Psoas muscle (tissue), 8 donors: ENCODE measurements at regions of chr19 and their contacts with region 1.

Region 1: GRCh38 chr19:18357041-18357440 is 16.6 kb downstream of the PGPEP1 start:
- DNase-seq: no peak
- ATAC-seq: no peak
- H3K4me3 ChIP-seq: no peak overlapping the region
- H3K27ac ChIP-seq: no peak overlapping the region
- H3K4me1 ChIP-seq: peaks cover 3% of the 10 kb centered on the region
- H3K27me3 ChIP-seq: no peaks in the 10 kb centered on the region
- CTCF ChIP-seq: no peak

Region 2: DNA sequence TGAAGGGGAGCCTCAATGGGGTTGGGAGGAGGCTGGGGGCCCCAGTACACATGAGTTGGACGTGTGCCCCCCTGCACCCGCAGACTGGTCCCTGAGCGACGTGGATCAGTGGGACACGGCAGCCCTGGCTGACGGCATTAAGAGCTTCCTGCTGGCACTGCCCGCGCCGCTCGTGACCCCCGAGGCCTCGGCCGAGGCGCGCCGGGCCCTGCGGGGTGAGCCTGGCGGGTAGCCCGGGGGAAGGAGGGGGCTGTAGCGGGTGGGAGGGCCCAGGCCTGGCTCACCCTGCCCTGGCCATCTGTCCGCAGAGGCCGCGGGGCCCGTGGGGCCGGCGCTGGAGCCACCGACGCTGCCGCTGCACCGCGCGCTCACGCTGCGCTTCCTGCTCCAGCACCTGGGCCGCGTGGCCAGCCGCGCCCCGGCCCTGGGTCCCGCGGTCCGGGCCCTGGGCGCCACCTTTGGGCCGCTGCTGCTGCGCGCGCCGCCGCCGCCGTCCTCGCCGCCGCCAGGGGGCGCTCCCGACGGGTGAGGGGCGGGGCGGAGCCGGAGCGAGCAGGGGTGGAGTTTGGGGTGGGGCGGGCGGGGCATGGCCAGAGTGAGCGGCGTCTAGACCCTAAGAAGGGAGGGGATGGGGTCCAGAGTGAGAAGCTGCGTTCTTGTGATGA is 195.9 kb before region 1 on chr19:
- intact Hi-C with region 1: no loop called
- DNase-seq: peak; percentile 79 to 88
- ATAC-seq: peak; percentile 73 to 83 (median 81)
- H3K4me3 ChIP-seq: peak overlapping the region; percentile 53
- H3K27ac ChIP-seq: peak overlapping the region; percentile 70
- H3K4me1 ChIP-seq: peaks cover 34% of the 10 kb centered on the region
- H3K27me3 ChIP-seq: no peaks in the 10 kb centered on the region
- CTCF ChIP-seq: peak; percentile 87

Region 3: DNA sequence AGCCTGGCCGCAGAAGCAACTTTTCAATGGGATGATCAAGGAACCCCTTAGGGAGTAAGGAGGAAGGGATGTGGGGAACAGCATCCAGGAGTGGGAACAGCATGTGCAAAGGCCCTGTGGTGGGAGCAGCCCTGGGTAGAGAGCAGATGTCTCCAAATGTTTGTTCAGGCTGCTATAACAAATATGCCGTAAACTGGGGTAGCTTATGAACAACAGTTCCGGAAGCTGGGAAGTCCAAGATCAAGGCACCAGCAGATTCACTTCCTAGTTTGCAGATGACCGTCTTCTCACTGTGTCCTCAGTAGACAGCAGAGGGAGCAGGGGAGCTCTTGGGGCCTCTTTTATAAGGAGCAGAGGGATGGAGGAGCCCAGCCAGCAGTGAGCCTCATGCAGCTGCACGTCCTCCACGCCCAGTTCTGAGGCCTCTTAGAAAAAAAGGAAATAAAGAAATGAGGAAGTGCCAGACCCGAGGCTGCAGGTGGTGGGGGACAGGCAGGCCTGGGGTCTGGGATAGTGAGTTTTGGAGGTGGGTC is 44.6 kb after region 1 on chr19:
- intact Hi-C with region 1: loop called in 1 of 2 experiments (anchors 5 kb)
- DNase-seq: peak; percentile 57 to 84
- ATAC-seq: peak; percentile 58 to 65 (median 60)
- H3K4me3 ChIP-seq: no peak overlapping the region
- H3K27ac ChIP-seq: no peak overlapping the region
- H3K4me1 ChIP-seq: peaks cover 2% of the 10 kb centered on the region
- H3K27me3 ChIP-seq: peaks cover 0 to 2% (median 0%) of the 10 kb centered on the region in 3 donors
- CTCF ChIP-seq: peak; percentile 14